CD4-positive, alpha-beta memory T cell (primary cell): ENCODE measurements at regions of chr11 and their contacts with region 1.

Region 1: DNA sequence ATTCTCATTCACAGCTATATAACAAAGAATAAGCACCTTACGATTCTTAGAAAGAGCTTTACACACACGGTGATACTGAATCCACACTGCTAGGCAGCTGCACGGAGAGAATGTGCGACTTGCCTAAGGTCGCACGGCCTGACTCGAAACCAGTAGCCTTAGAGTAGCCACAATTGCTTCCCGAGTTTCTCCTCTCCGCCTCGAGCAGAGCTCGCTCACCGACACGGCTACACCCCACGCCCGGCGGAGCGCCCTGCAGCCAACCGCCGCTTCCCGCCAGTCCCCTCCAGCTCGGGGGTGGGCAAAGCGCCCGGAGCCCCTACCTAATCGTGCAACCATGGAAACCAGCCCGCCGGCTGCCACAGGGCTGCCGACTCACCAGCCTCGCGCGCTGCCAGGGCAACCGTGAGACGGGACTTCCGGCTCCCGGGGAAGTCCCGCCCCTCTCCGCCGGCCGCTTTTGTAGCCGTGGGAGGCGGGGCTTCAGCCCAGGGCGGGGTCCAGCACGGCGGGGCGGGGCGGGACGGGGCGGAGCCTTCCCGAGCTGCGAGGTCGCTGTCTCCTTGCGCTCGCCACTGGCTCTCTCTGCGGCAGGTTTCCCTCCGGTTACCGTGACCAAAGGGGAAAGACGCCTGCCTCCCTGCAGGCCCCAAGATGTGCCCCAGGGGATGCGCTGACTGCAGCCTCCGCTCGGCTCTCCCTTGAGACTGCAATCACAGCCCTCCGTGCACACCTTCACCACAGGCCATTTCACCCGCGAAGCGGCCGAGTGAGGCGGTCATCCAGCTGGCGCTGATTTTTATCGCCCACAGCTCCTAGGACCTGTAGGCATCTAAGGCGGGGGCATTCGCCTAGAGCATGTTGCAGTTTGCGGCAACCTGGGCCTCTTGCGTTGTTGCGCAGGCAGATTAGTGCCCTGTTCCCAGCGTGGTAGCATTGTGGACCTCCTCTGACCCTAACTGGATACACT is 1.1 kb downstream of the BSCL2 start:
- DNase-seq: peak; percentile 90 to 95 (median 91)
- H3K4me3 ChIP-seq: peak overlapping the region; percentile 69 to 86
- H3K4me3 Mint-ChIP-seq: peak overlapping the region; percentile 86 to 95 (median 89)
- H3K27ac ChIP-seq: peak overlapping the region; percentile 78
- H3K27ac Mint-ChIP-seq: peak overlapping the region; percentile 91 to 98 (median 94)
- H3K4me1 ChIP-seq: peaks cover 50% of the 10 kb centered on the region
- H3K4me1 Mint-ChIP-seq: peaks cover 21 to 51% (median 36%) of the 10 kb centered on the region in 4 donors
- H3K27me3 ChIP-seq: no peaks in the 10 kb centered on the region
- H3K27me3 Mint-ChIP-seq: no peaks in the 10 kb centered on the region

Region 2: GRCh38 chr11:62573592-62574362 is 132.4 kb before region 1 on chr11 and contains the start of gene EEF1G:
- CTCF ChIA-PET with region 1: no interaction called
- POLR2A ChIA-PET with region 1: interaction called, 10 read pairs
- intact Hi-C with region 1: no loop called
- DNase-seq: peak; percentile 98 to 100 (median 100)
- H3K4me3 ChIP-seq: peak within 1 kb of the TSS; percentile 89 to 100
- H3K4me3 Mint-ChIP-seq: peak within 1 kb of the TSS; percentile 92 to 98 (median 98)
- H3K27ac ChIP-seq: peak within 1 kb of the TSS; percentile 77
- H3K27ac Mint-ChIP-seq: peak within 1 kb of the TSS; percentile 94 to 98 (median 97)
- H3K4me1 ChIP-seq: peaks cover 44% of the 10 kb centered on the region
- H3K4me1 Mint-ChIP-seq: peaks cover 34 to 60% (median 47%) of the 10 kb centered on the region in 4 donors
- H3K27me3 ChIP-seq: no peaks in the 10 kb centered on the region
- H3K27me3 Mint-ChIP-seq: no peaks in the 10 kb centered on the region
- total RNA-seq, gene EEF1G: 1,815 to 1,855 TPM

Region 3: GRCh38 chr11:62621567-62622470 is 84.3 kb before region 1 on chr11 and contains the start of gene B3GAT3:
- CTCF ChIA-PET with region 1: interaction called, 3 read pairs
- POLR2A ChIA-PET with region 1: interaction called, 12 read pairs
- intact Hi-C with region 1: no loop called
- DNase-seq: peak; percentile 95 to 99 (median 96)
- H3K4me3 ChIP-seq: peak within 1 kb of the TSS; percentile 83 to 89
- H3K4me3 Mint-ChIP-seq: peak within 1 kb of the TSS; percentile 89 to 98 (median 95)
- H3K27ac ChIP-seq: peak within 1 kb of the TSS; percentile 94
- H3K27ac Mint-ChIP-seq: peak within 1 kb of the TSS; percentile 91 to 99 (median 98)
- H3K4me1 ChIP-seq: peaks cover 26% of the 10 kb centered on the region
- H3K4me1 Mint-ChIP-seq: peaks cover 19 to 29% (median 20%) of the 10 kb centered on the region in 4 donors
- H3K27me3 ChIP-seq: no peaks in the 10 kb centered on the region
- H3K27me3 Mint-ChIP-seq: no peaks in the 10 kb centered on the region
- total RNA-seq, gene B3GAT3: 66.3 to 74.3 TPM

Region 4: GRCh38 chr11:62671575-62672389 is 34.4 kb before region 1 on chr11 and contains the starts of genes LBHD1 and UQCC3:
- CTCF ChIA-PET with region 1: interaction called, 3 read pairs
- POLR2A ChIA-PET with region 1: interaction called, 80 read pairs
- intact Hi-C with region 1: no loop called
- DNase-seq: peak; percentile 68 to 80 (median 75)
- H3K4me3 ChIP-seq: peak within 1 kb of the TSS; percentile 91 to 97
- H3K4me3 Mint-ChIP-seq: peak within 1 kb of the TSS; percentile 93 to 99 (median 99)
- H3K27ac ChIP-seq: peak within 1 kb of the TSS; percentile 74
- H3K27ac Mint-ChIP-seq: peak within 1 kb of the TSS; percentile 89 to 98 (median 97)
- H3K4me1 ChIP-seq: peaks cover 55% of the 10 kb centered on the region
- H3K4me1 Mint-ChIP-seq: peaks cover 14 to 74% (median 43%) of the 10 kb centered on the region in 4 donors
- H3K27me3 ChIP-seq: no peaks in the 10 kb centered on the region
- H3K27me3 Mint-ChIP-seq: no peaks in the 10 kb centered on the region
- total RNA-seq, gene LBHD1: 26.7 to 28.6 TPM
- total RNA-seq, gene UQCC3: 7.2 to 8.5 TPM

Region 5: GRCh38 chr11:62726915-62727763 is 21.0 kb after region 1 on chr11 and contains the start of gene HNRNPUL2:
- CTCF ChIA-PET with region 1: interaction called, 4 read pairs
- POLR2A ChIA-PET with region 1: interaction called, 283 read pairs
- intact Hi-C with region 1: loop called (anchors 1 kb)
- DNase-seq: peak; percentile 99
- H3K4me3 ChIP-seq: peak within 1 kb of the TSS; percentile 95 to 99
- H3K4me3 Mint-ChIP-seq: peak within 1 kb of the TSS; percentile 84 to 98 (median 96)
- H3K27ac ChIP-seq: peak within 1 kb of the TSS; percentile 93
- H3K27ac Mint-ChIP-seq: peak within 1 kb of the TSS; percentile 98 to 99 (median 99)
- H3K4me1 ChIP-seq: peaks cover 50% of the 10 kb centered on the region
- H3K4me1 Mint-ChIP-seq: peaks cover 28 to 84% (median 50%) of the 10 kb centered on the region in 4 donors
- H3K27me3 ChIP-seq: no peaks in the 10 kb centered on the region
- H3K27me3 Mint-ChIP-seq: no peaks in the 10 kb centered on the region
- total RNA-seq, gene HNRNPUL2: 79.6 to 83.4 TPM

Region 6: GRCh38 chr11:62787005-62787759 is 81.0 kb after region 1 on chr11 and contains the start of gene TMEM179B:
- CTCF ChIA-PET with region 1: interaction called, 11 read pairs
- POLR2A ChIA-PET with region 1: interaction called, 25 read pairs
- intact Hi-C with region 1: loop called (anchors 1 kb)
- DNase-seq: peak; percentile 95 to 99 (median 96)
- H3K4me3 ChIP-seq: peak within 1 kb of the TSS; percentile 73 to 95
- H3K4me3 Mint-ChIP-seq: peak within 1 kb of the TSS; percentile 93 to 97 (median 96)
- H3K27ac ChIP-seq: peak within 1 kb of the TSS; percentile 84
- H3K27ac Mint-ChIP-seq: peak within 1 kb of the TSS; percentile 89 to 98 (median 97)
- H3K4me1 ChIP-seq: peaks cover 45% of the 10 kb centered on the region
- H3K4me1 Mint-ChIP-seq: peaks cover 29 to 61% (median 47%) of the 10 kb centered on the region in 4 donors
- H3K27me3 ChIP-seq: no peaks in the 10 kb centered on the region
- H3K27me3 Mint-ChIP-seq: no peaks in the 10 kb centered on the region
- total RNA-seq, gene TMEM179B: 66.3 to 66.6 TPM

Region 7: DNA sequence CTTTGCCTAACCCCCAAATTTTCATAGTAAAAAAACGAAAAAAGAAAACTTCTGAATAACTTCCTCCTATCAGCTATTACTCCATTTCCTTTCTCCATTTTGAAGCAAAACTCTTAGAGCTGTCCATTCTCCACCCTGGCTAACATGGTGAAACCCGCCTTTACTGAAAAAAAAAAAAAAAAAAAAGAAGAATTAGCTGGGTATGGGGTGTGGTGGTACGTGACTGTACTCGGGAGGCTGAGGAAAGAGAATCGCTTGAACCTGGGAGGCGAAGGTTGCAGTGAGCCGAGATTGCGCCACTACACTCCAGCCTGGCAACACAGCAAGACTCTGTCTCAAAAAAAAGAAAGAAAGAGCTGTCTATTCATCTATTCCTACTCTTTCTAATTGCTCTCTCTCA is 110.4 kb after region 1 on chr11:
- CTCF ChIA-PET with region 1: no interaction called
- POLR2A ChIA-PET with region 1: no interaction called
- intact Hi-C with region 1: no loop called
- DNase-seq: no peak
- H3K4me3 ChIP-seq: no peak overlapping the region
- H3K4me3 Mint-ChIP-seq: no peak overlapping the region
- H3K27ac ChIP-seq: no peak overlapping the region
- H3K27ac Mint-ChIP-seq: no peak overlapping the region
- H3K4me1 ChIP-seq: no peaks in the 10 kb centered on the region
- H3K4me1 Mint-ChIP-seq: peaks cover 0 to 3% (median 0%) of the 10 kb centered on the region in 4 donors
- H3K27me3 ChIP-seq: no peaks in the 10 kb centered on the region
- H3K27me3 Mint-ChIP-seq: no peaks in the 10 kb centered on the region

Region 8: GRCh38 chr11:62855571-62856332 is 149.6 kb after region 1 on chr11:
- CTCF ChIA-PET with region 1: no interaction called
- POLR2A ChIA-PET with region 1: interaction called, 37 read pairs
- intact Hi-C with region 1: loop called (anchors 1 kb)
- DNase-seq: peak; percentile 98 to 99 (median 99)
- H3K4me3 ChIP-seq: peak overlapping the region; percentile 89 to 91
- H3K4me3 Mint-ChIP-seq: peak overlapping the region; percentile 95 to 99 (median 96)
- H3K27ac ChIP-seq: peak overlapping the region; percentile 78
- H3K27ac Mint-ChIP-seq: peak overlapping the region; percentile 93 to 98 (median 95)
- H3K4me1 ChIP-seq: peaks cover 57% of the 10 kb centered on the region
- H3K4me1 Mint-ChIP-seq: peaks cover 41 to 67% (median 55%) of the 10 kb centered on the region in 4 donors
- H3K27me3 ChIP-seq: no peaks in the 10 kb centered on the region
- H3K27me3 Mint-ChIP-seq: no peaks in the 10 kb centered on the region